CD8-positive, alpha-beta T cell (primary cell): ENCODE measurements at regions of chr1 and their contacts with region 1.

Region 1: DNA sequence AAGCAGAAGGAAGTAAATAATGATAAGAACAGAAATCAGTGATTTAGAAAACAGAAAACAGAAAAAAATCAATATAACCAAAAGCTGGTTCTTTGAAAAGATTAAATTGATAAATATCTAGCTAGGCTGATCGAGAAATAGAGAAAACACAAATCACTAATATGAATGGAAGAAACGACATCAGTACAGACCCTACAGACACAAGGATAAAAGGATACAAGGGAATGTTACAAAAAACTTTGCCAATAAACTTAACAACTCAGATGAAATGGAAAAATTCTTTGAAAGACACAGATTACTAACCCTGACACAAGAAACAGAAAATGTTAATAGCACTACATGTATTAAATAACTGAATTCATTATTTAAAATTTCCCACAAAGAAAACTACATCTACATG is 6.3 kb upstream of the ARHGAP29 start:
- DNase-seq: no peak
- ATAC-seq: no peak
- H3K4me3 ChIP-seq: no peak overlapping the region
- H3K4me3 Mint-ChIP-seq: no peak overlapping the region
- H3K27ac ChIP-seq: no peak overlapping the region
- H3K27ac Mint-ChIP-seq: no peak overlapping the region
- H3K4me1 ChIP-seq: no peaks in the 10 kb centered on the region
- H3K4me1 Mint-ChIP-seq: peaks cover 11% of the 10 kb centered on the region
- H3K27me3 ChIP-seq: peaks cover 5 to 18% of the 10 kb centered on the region in 2 experiments
- H3K27me3 Mint-ChIP-seq: peaks cover 73% of the 10 kb centered on the region
- CTCF ChIP-seq: no peak

Region 2: GRCh38 chr1:94209425-94209824 is 34.2 kb before region 1 on chr1:
- CTCF ChIA-PET with region 1: no interaction called
- POLR2A ChIA-PET with region 1: no interaction called
- intact Hi-C with region 1: loop called in 1 of 2 experiments (anchors 1 kb)
- DNase-seq: no peak
- ATAC-seq: no peak
- H3K4me3 ChIP-seq: no peak overlapping the region
- H3K4me3 Mint-ChIP-seq: no peak overlapping the region
- H3K27ac ChIP-seq: no peak overlapping the region
- H3K27ac Mint-ChIP-seq: no peak overlapping the region
- H3K4me1 ChIP-seq: no peaks in the 10 kb centered on the region
- H3K4me1 Mint-ChIP-seq: no peaks in the 10 kb centered on the region
- H3K27me3 ChIP-seq: no peaks in the 10 kb centered on the region
- H3K27me3 Mint-ChIP-seq: peaks cover 6% of the 10 kb centered on the region
- CTCF ChIP-seq: no peak

Region 3: GRCh38 chr1:94259635-94260289 is 16.1 kb after region 1 on chr1:
- CTCF ChIA-PET with region 1: no interaction called
- POLR2A ChIA-PET with region 1: no interaction called
- intact Hi-C with region 1: no loop called
- DNase-seq: no peak
- ATAC-seq: no peak
- H3K4me3 ChIP-seq: no peak overlapping the region
- H3K4me3 Mint-ChIP-seq: no peak overlapping the region
- H3K27ac ChIP-seq: no peak overlapping the region
- H3K27ac Mint-ChIP-seq: no peak overlapping the region
- H3K4me1 ChIP-seq: no peaks in the 10 kb centered on the region
- H3K4me1 Mint-ChIP-seq: no peaks in the 10 kb centered on the region
- H3K27me3 ChIP-seq: no peaks in the 10 kb centered on the region
- H3K27me3 Mint-ChIP-seq: peaks cover 12% of the 10 kb centered on the region
- CTCF ChIP-seq: no peak

Region 4: GRCh38 chr1:94425821-94426484 is 182.3 kb after region 1 on chr1:
- CTCF ChIA-PET with region 1: no interaction called
- POLR2A ChIA-PET with region 1: no interaction called
- intact Hi-C with region 1: no loop called
- DNase-seq: no peak
- ATAC-seq: no peak
- H3K4me3 ChIP-seq: no peak overlapping the region
- H3K4me3 Mint-ChIP-seq: no peak overlapping the region
- H3K27ac ChIP-seq: no peak overlapping the region
- H3K27ac Mint-ChIP-seq: no peak overlapping the region
- H3K4me1 ChIP-seq: peaks cover 7% of the 10 kb centered on the region
- H3K4me1 Mint-ChIP-seq: peaks cover 78% of the 10 kb centered on the region
- H3K27me3 ChIP-seq: no peaks in the 10 kb centered on the region
- H3K27me3 Mint-ChIP-seq: no peaks in the 10 kb centered on the region
- CTCF ChIP-seq: no peak